A549 (cell line): ENCODE measurements at regions of chr1 and their contacts with region 1.

Region 1: GRCh38 chr1:116737020-116737854 is 17.0 kb upstream of the CD2 start:
- DNase-seq: peak; percentile 29 to 44
- ATAC-seq: peak; percentile 66 to 77; a peak in 5 of 6 replicates
- H3K4me3 ChIP-seq: no peak overlapping the region
- H3K27ac ChIP-seq: no peak overlapping the region
- H3K4me1 ChIP-seq: no peaks in the 10 kb centered on the region
- CTCF ChIP-seq: peak; percentile 74
- EP300 ChIP-seq: no peak
- POLR2A ChIP-seq: no peak
- RAD21 ChIP-seq: peak; percentile 84 to 85

Region 2: DNA sequence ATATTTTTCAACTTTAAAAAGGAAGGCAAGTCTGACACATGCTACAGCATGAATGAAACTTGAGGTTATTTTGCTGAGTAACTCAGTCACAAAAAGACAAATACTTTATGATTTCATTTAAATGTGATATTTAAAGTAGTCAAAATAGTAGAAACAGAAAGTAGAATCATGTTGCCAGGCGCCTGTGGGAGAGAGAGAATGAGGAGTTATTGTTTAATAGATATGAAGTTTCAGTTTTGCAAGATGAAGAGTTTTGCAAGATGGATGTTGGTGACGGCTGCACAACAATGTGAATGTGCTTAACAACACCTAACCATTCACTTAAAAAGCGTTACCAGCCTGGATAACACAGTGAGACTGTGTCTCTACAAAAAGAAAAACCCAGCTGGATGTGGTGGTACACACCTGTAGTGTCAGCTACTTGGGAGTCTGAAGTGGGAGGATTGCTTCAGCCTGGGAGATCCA is 384.9 kb before region 1 on chr1:
- CTCF ChIA-PET with region 1: no interaction called
- POLR2A ChIA-PET with region 1: no interaction called
- DNase-seq: no peak
- ATAC-seq: no peak
- H3K4me3 ChIP-seq: no peak overlapping the region
- H3K27ac ChIP-seq: no peak overlapping the region
- H3K4me1 ChIP-seq: 0 out of 3 replicates have a peak, but pooled peaks cover 2% of the 10 kb centered on the region
- CTCF ChIP-seq: no peak
- EP300 ChIP-seq: no peak
- POLR2A ChIP-seq: no peak
- RAD21 ChIP-seq: no peak

Region 3: DNA sequence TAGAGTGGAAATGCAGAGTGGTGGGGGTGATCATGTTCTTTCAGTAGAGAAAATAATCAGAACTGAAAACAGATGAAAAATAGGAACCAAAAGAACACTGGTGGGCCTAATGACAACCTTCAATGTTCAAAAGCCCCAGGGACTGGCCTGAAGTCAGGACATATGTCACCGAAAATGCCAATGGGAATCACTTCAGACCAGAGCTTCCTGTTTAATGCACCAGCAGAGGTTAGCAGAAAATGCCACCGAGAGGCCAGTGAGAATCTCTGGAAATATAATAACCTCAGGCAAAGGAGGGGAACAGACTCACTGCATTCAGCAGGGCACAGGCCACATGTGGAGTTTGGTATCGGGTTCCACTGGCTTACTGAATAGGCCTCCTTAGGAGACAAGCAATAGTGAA is 150.5 kb before region 1 on chr1:
- CTCF ChIA-PET with region 1: no interaction called
- POLR2A ChIA-PET with region 1: no interaction called
- DNase-seq: no peak
- ATAC-seq: no peak
- H3K4me3 ChIP-seq: no peak overlapping the region
- H3K27ac ChIP-seq: no peak overlapping the region
- H3K4me1 ChIP-seq: peaks cover 14% of the 10 kb centered on the region
- CTCF ChIP-seq: no peak
- EP300 ChIP-seq: no peak
- POLR2A ChIP-seq: no peak
- RAD21 ChIP-seq: no peak

Region 4: GRCh38 chr1:116724765-116725375 is 12.4 kb before region 1 on chr1:
- CTCF ChIA-PET with region 1: interaction called, 13 read pairs
- POLR2A ChIA-PET with region 1: no interaction called
- DNase-seq: peak; percentile 27 to 58
- ATAC-seq: peak; percentile 67 to 77; a peak in 3 of 6 replicates
- H3K4me3 ChIP-seq: no peak overlapping the region
- H3K27ac ChIP-seq: no peak overlapping the region
- H3K4me1 ChIP-seq: no peaks in the 10 kb centered on the region
- CTCF ChIP-seq: peak; percentile 62
- EP300 ChIP-seq: no peak
- POLR2A ChIP-seq: no peak
- RAD21 ChIP-seq: peak; percentile 45 to 47; a peak in 3 of 5 replicates

Region 5: GRCh38 chr1:117059678-117060440 is 322.6 kb after region 1 on chr1 and contains the start of gene TTF2:
- CTCF ChIA-PET with region 1: interaction called, 48 read pairs
- POLR2A ChIA-PET with region 1: no interaction called
- DNase-seq: peak; percentile 94 to 98
- ATAC-seq: peak; percentile 95 to 98
- H3K4me3 ChIP-seq: peak within 1 kb of the TSS; percentile 78
- H3K27ac ChIP-seq: peak within 1 kb of the TSS; percentile 76 to 88
- H3K4me1 ChIP-seq: peaks cover 19% of the 10 kb centered on the region; the same call in 2 of the 3 replicates
- CTCF ChIP-seq: no peak
- EP300 ChIP-seq: no peak
- POLR2A ChIP-seq: peak; percentile 47
- RAD21 ChIP-seq: no peak
- polyA plus RNA-seq, gene TTF2: 26.6 and 31.0 TPM in 2 replicates